ENCODE measurements at regions of chr1 and their contacts with region 1.

Region 1: DNA sequence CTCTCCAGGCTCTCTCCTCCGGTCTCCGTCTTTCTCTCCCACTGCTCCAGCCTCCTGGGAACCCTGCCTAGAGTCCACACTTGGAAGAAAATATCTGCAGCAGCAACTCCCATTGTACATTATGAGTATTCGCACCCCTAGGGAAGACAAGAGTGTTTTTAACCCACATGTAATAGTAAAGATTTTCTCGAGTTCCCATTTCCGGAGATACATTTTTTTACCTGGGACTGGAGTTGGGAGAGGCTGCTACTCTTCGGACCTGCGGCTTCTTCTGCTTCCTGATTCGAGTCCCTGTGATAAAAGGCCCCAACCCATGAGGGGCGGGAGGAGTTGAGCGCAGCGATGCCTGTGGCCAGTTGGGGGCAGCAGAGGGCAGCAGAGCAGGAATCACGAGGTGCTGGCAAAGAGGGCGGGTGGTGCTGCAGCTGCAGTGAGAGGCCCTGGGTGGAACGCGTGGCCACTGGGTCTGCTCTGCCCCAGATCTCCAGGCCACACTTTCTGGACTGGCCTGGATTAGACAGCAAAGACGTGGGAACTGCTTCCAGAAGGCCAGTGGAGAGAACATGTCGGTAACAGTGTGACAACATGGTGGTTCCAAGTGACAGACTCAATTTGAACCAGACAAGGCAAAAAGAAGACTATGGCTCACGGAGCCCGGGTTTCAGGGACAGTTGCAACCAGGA is 221.0 kb upstream of the CSF3R start:
- DNase-seq: peak; percentile 78
- ATAC-seq: peak; percentile 88 to 93

Region 2: GRCh38 chr1:36576118-36576517 is 127.5 kb before region 1 on chr1:
- intact Hi-C with region 1: loop called in 1 of 2 experiments (anchors 10 kb)
- DNase-seq: peak; percentile 57
- ATAC-seq: peak; percentile 72 to 83

Region 3: DNA sequence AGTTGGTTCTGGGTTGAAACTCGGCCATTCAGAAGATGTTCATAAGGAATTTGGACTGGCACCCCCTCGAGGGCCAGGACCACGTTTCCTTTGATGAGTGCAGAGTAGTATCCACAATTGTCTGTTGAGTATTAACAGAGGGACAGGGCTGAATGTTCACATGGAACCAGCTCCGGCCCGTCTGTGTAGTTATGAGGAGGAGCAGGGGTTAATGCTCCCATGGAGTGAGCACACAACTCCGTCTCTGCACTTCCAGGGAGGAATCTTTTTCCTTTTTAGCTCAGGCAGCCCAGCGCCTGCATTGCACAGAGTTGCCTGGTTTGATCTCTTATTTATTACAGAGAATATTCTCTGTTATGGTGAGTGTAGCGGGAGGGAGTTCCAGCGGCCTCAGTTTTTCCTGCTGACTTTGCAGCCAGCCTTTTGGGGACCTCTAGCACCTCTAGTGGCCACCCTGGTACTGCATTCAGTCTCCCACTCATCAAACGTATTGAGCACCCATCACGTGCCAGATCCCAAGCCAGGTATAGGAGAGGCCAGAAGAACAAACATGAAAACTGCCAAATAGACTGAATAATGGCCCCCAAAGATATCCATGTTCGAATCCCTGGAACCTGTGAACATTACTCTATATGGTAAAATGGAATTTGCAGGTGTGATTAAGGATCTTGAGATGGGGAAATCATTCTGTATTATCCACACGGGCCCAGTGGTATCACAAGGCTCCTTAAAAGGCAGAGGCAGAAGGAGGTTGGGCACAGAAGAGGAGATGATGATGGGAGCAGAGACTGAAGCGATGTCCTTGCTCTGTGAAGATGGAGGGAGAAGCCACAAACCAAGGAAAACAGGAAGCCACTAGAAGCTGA is 53.2 kb before region 1 on chr1:
- intact Hi-C with region 1: no loop called
- DNase-seq: peak; percentile 60
- ATAC-seq: peak; percentile 53 to 67

Measured in left cardiac atrium (tissue), 4 donors.